ENCODE measurements at regions of chr20 and their contacts with region 1.

Region 1: GRCh38 chr20:10671221-10671918 is 2.4 kb downstream of the JAG1 start:
- DNase-seq: peak; percentile 64
- ATAC-seq: peak; percentile 15
- H3K4me3 Mint-ChIP-seq: no peak overlapping the region
- H3K27ac Mint-ChIP-seq: no peak overlapping the region
- H3K4me1 Mint-ChIP-seq: peaks cover 27% of the 10 kb centered on the region
- H3K27me3 Mint-ChIP-seq: peaks cover 35% of the 10 kb centered on the region

Region 2: DNA sequence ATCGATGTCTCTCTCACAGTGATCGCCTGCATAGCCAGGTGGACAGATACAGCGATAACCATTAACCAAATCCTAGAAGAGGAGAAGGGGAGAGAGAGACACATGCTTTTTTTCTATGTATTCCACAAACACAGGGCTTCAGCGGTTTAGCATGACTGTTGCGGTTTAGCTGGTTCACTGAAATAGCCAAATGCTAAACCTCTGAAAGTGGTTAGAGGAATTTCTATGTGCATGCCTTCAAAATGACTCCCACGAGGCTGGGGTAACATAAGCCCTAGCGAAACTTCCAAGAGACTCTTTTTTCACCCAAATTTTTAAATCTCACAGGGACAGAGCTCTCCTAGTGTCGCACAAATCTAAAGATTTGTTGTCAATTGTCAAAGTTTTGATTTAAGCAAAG is 22.7 kb before region 1 on chr20:
- CTCF ChIA-PET with region 1: interaction called, 13 read pairs
- POLR2A ChIA-PET with region 1: no interaction called
- DNase-seq: no peak
- ATAC-seq: no peak
- H3K4me3 Mint-ChIP-seq: no peak overlapping the region
- H3K27ac Mint-ChIP-seq: no peak overlapping the region
- H3K4me1 Mint-ChIP-seq: peaks cover 10% of the 10 kb centered on the region
- H3K27me3 Mint-ChIP-seq: peaks cover 2% of the 10 kb centered on the region

Region 3: DNA sequence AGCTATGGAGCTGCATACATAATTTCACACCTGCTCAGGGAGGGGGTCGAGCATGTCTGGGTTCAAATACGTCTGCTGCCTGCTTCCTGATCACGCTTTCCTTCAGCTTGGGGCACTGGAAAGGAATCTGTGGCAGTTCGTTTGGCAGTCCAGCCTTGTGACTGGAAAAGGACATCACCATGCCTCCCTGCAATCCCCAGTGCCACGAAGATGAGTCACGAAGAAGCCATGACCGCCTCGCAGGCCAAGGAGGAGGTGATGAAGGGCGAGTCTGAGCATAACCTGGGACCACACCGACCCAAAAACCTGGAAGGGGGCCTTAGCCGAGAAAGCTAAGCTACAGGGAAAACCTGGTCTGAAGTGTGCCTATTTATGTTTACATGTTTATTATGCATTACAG is 10.7 kb before region 1 on chr20:
- CTCF ChIA-PET with region 1: interaction called, 15 read pairs
- POLR2A ChIA-PET with region 1: no interaction called
- DNase-seq: no peak
- ATAC-seq: no peak
- H3K4me3 Mint-ChIP-seq: no peak overlapping the region
- H3K27ac Mint-ChIP-seq: no peak overlapping the region
- H3K4me1 Mint-ChIP-seq: no peaks in the 10 kb centered on the region
- H3K27me3 Mint-ChIP-seq: peaks cover 26% of the 10 kb centered on the region

Measured in activated CD8-positive, alpha-beta T cell treated with anti-CD3 and anti-CD28 coated beads, Interleukin-2, amount 10 ng/mL, durations not matched to agents 7 days and 5 days (primary cell).